ENCODE measurements at regions of chr16 and their contacts with region 1.

Region 1: GRCh38 chr16:83068686-83069085 is 441.9 kb downstream of the CDH13 start:
- DNase-seq: no peak
- ATAC-seq: peak; percentile 73
- H3K4me3 ChIP-seq: no peak overlapping the region
- H3K27ac ChIP-seq: no peak overlapping the region
- H3K4me1 ChIP-seq: peaks cover 6% of the 10 kb centered on the region in 2 donors
- H3K27me3 ChIP-seq: no peaks in the 10 kb centered on the region

Region 2: DNA sequence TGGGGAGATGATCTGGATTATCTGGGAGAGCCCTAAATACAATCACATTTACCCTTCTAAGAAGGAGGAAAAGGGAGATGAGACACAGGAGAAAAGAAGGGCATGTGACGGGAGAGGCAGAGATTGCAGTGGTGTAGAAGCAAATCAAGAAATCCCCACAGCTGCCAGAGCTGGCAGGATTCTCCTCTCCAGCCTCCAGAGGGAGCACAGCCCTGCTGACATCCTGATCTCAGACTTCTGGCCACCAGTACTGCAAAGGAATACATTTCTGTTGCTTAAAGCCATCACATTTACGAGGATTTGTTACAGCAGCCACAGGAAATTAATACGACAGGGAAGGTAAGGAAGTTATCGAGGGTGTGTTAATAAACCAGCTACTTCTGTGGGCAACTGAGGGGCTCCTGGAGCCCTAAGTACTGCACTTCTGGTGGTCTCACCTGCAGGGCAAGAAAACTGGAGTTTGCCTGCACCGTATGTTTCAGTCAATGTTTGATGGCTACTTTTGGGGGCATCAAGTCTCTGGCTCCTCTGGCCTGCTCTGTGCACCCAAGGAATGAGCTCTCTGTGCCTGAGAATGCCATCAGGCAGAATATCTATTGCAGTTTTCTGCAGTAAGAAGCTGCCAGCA is 464.8 kb before region 1 on chr16:
- intact Hi-C with region 1: loop called (anchors 10 kb)
- DNase-seq: peak; percentile 60 to 78
- ATAC-seq: peak; percentile 51
- H3K4me3 ChIP-seq: no peak overlapping the region
- H3K27ac ChIP-seq: no peak overlapping the region
- H3K4me1 ChIP-seq: no peaks in the 10 kb centered on the region
- H3K27me3 ChIP-seq: no peaks in the 10 kb centered on the region

Region 3: GRCh38 chr16:82626791-82627261 is 441.9 kb before region 1 on chr16 and contains the start of gene CDH13:
- intact Hi-C with region 1: loop called (anchors 1 to 10 kb)
- DNase-seq: peak; percentile 66 to 83
- ATAC-seq: peak; percentile 39
- H3K4me3 ChIP-seq: peak within 1 kb of the TSS; percentile 86
- H3K27ac ChIP-seq: peak within 1 kb of the TSS; percentile 15 to 45
- H3K4me1 ChIP-seq: peaks cover 4 to 5% of the 10 kb centered on the region in 2 donors
- H3K27me3 ChIP-seq: no peaks in the 10 kb centered on the region
- total RNA-seq, gene CDH13: 159 to 265 TPM

Region 4: DNA sequence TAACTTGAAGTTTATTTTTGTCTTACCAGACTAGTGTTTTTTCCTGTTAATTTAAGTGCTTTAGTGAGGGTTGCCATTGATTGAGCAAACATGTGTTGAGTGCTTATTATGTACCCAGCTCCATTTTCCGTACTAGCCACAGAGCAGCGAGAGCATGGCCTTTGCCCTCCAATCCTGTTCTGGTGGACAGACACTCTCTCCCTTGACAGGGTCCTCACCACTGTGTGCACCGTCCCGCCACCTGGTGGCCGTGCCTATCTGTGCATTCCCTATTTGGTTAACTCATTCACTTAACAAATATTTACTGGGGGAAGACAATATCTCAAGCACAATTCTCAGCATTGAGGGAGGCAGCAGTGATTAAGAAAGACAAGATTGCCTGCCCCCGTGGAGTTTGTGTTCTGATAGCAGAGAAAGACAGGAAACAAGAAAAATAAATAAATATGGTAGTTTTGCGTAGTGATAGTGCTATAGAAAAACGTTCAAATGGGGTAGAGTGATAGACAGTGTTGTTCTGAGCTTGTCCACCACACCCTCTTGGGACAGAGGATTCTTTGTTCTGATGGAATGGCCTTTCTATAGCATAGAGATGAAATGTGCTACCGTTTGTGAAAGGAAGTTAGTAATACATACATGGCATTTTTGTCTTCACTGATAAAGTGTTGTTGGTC is 428.9 kb before region 1 on chr16:
- intact Hi-C with region 1: loop called in 1 of 2 experiments (anchors 10 kb)
- DNase-seq: peak in 1 of 2 donors; percentile 80
- ATAC-seq: no peak
- H3K4me3 ChIP-seq: no peak overlapping the region
- H3K27ac ChIP-seq: no peak overlapping the region
- H3K4me1 ChIP-seq: no peaks in the 10 kb centered on the region
- H3K27me3 ChIP-seq: no peaks in the 10 kb centered on the region

Region 5: GRCh38 chr16:82761236-82761635 is 307.4 kb before region 1 on chr16:
- intact Hi-C with region 1: loop called in 1 of 2 experiments (anchors 10 kb)
- DNase-seq: peak; percentile 84 to 93
- ATAC-seq: peak; percentile 75
- H3K4me3 ChIP-seq: peak overlapping the region in 1 of 2 donors; percentile 21
- H3K27ac ChIP-seq: peak overlapping the region in 1 of 2 donors; percentile 75
- H3K4me1 ChIP-seq: peaks cover 7 to 13% of the 10 kb centered on the region in 2 donors
- H3K27me3 ChIP-seq: no peaks in the 10 kb centered on the region